ENCODE measurements at regions of chr20 and their contacts with region 1.

Region 1: DNA sequence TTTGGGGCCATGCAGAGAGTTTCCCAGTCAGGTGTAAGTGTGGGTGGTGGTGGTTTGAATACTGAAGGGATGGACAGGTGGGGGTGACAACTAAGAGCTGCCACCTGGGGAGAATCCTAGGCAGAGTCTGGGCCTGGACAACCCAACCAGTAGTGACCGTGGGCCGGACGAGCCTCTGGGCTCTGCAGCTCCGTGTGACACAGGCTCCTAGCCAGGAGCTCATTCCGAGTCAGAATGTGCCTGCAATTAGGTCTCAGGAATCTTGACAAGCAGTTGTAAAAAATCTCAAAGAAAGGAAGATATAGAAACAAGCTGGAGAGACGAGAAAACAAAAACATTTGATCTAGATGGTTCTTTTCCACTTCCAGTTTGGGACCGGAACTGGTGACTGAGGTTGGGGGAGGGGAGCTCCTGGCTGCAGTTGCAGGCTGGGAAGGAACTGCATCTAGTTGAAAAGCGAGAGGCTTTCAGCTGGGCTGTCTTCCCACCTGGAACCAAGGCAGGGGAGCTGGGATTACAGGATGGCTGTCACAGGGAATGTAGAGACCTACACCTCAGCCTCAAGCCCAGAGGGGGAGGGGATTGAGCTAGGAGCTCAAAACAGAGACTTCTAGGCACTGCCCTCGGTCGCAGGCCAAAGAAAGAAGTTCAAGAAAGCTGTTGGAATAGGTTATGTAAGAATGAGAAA is 156.9 kb downstream of the PAX1 start:
- DNase-seq: no peak
- ATAC-seq: peak; percentile 59
- H3K4me3 ChIP-seq: no peak overlapping the region
- H3K27ac ChIP-seq: no peak overlapping the region
- H3K4me1 ChIP-seq: no peaks in the 10 kb centered on the region
- H3K27me3 ChIP-seq: no peaks in the 10 kb centered on the region

Region 2: GRCh38 chr20:21767739-21768223 is 94.6 kb before region 1 on chr20:
- intact Hi-C with region 1: no loop called
- DNase-seq: no peak
- ATAC-seq: no peak
- H3K4me3 ChIP-seq: no peak overlapping the region
- H3K27ac ChIP-seq: no peak overlapping the region
- H3K4me1 ChIP-seq: no peaks in the 10 kb centered on the region
- H3K27me3 ChIP-seq: peaks cover 0 to 2% of the 10 kb centered on the region in 2 donors

Region 3: GRCh38 chr20:21808863-21809664 is 53.3 kb before region 1 on chr20:
- intact Hi-C with region 1: loop called in 1 of 2 experiments (anchors 10 kb)
- DNase-seq: peak; percentile 58 to 83
- ATAC-seq: no peak
- H3K4me3 ChIP-seq: no peak overlapping the region
- H3K27ac ChIP-seq: no peak overlapping the region
- H3K4me1 ChIP-seq: no peaks in the 10 kb centered on the region
- H3K27me3 ChIP-seq: no peaks in the 10 kb centered on the region

Measured in aorta (tissue), 5 donors.